GM10248 (cell line): ENCODE measurements at regions of chr16 and their contacts with region 1.

Region 1: DNA sequence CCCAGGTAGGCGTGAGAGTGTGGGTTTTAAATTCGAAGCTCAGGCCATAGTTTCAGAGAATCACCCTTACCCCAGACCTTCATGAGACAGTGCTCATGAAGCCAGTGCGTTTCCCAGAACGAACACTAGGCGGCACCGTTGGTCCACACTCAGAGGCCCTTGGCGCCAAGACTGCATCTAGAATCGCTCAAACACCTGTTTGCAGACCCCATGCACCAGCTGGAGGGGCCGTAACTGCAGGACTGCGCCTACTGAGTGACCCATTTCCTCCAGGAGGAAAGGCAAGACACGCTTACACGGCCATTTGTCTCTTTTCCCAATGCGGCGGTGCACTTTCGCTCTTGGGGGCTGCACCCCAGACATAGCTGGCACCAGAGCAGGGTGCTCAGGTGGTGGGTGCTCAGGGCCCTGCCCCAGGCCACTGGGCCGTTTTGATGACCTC is 34.0 kb downstream of the ADGRG5 start:
- DNase-seq: peak; percentile 79
- CTCF ChIP-seq: peak; percentile 99

Region 2: DNA sequence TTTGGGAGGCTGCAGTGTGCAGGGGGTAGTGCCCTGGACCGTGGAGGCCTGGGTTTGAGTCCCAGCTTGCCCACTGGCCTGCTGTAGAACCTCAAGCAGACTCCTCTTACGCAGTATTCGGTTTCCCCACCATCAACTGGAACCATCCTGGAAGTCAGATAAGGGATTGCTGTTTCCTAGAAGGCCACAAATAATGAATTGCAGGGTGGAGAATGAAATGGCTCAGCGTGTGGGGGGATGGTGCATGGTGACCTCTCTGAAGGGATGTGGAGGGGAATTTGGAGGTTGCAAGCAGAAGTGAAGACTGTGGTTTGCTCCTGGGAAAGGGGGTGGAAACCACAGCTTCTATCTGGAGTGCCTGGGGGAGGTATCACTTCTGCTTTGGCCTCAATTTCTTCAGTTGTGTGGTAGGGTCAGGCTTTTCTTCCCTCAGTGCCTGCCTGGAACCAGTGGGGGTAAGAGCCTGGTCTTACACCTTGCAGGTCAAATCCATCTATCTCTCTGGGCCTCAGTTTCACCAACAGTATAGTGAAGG is 32.3 kb before region 1 on chr16:
- CTCF ChIA-PET with region 1: interaction called, 23 read pairs
- POLR2A ChIA-PET with region 1: no interaction called
- DNase-seq: peak; percentile 72
- CTCF ChIP-seq: no peak

Region 3: GRCh38 chr16:57564571-57565270 is 11.7 kb before region 1 on chr16:
- CTCF ChIA-PET with region 1: interaction called, 32 read pairs
- POLR2A ChIA-PET with region 1: no interaction called
- DNase-seq: no peak
- CTCF ChIP-seq: no peak

Region 4: DNA sequence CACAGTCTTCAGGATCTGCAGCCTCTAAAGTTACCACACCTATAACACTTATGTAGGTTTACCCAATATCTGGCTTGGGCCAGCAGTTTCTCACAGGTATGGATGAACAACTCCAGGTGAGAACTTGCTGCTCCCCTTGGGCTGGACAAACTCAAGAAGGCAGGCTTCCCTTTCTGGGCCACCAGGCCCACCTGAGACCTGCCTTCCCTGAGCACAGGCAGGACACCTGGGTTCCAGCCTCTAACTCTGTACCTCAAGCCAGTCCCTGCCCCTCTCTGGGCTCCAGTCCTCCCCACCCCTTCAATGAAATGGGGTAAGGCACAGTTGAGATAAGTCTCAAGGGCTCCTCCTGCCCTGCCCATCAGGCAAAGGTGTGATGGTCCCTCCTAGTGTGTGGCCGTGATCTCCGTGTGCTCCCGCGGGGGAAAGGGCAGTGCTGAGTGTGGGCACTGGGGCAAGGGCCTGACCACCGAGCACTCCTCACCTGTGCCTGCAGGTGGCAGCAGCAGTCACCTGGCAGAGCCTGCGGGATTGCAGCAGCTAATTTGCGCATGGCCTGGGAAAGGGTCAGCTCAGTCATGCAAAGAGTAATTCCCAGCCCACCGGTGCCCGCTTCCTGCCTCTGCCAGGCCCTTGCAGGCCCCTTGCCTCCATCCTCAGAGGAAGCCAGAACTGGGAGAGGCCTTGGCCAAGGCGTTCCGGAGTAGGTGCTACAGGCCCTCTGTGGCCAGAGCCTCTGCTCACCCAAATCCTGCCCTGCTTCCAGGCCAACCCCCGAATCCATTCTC is 23.8 kb after region 1 on chr16:
- CTCF ChIA-PET with region 1: interaction called, 179 read pairs
- POLR2A ChIA-PET with region 1: no interaction called
- DNase-seq: peak; percentile 71
- CTCF ChIP-seq: peak; percentile 84

Region 5: GRCh38 chr16:57639172-57639887 is 62.9 kb after region 1 on chr16:
- CTCF ChIA-PET with region 1: interaction called, 23 read pairs
- POLR2A ChIA-PET with region 1: no interaction called
- DNase-seq: no peak
- CTCF ChIP-seq: no peak

Region 6: DNA sequence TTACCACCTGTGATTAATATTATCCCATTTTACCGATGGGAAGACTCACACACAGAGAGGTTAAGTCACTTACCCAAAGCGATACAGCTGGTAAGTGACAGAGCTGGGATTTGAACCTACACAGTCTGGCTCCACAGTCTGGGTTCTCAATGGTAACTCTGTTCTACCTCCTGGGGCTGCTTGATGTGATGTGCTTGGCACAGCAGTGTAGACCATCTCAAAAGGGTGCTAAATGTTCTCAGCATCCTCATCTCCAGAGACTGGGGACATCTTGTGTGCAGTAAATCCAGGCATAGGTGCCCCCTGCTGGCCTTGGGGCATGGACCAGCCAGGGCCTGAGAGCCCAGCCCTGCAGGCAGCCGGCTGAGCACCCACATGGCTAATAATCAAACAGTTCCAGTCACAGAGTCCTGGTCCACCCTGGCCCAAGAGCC is 143.7 kb after region 1 on chr16:
- CTCF ChIA-PET with region 1: interaction called, 15 read pairs
- POLR2A ChIA-PET with region 1: no interaction called
- DNase-seq: peak; percentile 66
- CTCF ChIP-seq: peak; percentile 67